Mammary epithelial cell (primary cell): ENCODE measurements at regions of chr20 and their contacts with region 1.

Region 1: GRCh38 chr20:24634855-24635254 is 165.4 kb downstream of the SYNDIG1 start:
- DNase-seq: peak; percentile 81
- H3K4me3 ChIP-seq: no peak overlapping the region
- H3K27ac ChIP-seq: no peak overlapping the region
- H3K4me1 ChIP-seq: peaks cover 18% of the 10 kb centered on the region
- H3K27me3 ChIP-seq: no peaks in the 10 kb centered on the region
- CTCF ChIP-seq: no peak

Region 2: DNA sequence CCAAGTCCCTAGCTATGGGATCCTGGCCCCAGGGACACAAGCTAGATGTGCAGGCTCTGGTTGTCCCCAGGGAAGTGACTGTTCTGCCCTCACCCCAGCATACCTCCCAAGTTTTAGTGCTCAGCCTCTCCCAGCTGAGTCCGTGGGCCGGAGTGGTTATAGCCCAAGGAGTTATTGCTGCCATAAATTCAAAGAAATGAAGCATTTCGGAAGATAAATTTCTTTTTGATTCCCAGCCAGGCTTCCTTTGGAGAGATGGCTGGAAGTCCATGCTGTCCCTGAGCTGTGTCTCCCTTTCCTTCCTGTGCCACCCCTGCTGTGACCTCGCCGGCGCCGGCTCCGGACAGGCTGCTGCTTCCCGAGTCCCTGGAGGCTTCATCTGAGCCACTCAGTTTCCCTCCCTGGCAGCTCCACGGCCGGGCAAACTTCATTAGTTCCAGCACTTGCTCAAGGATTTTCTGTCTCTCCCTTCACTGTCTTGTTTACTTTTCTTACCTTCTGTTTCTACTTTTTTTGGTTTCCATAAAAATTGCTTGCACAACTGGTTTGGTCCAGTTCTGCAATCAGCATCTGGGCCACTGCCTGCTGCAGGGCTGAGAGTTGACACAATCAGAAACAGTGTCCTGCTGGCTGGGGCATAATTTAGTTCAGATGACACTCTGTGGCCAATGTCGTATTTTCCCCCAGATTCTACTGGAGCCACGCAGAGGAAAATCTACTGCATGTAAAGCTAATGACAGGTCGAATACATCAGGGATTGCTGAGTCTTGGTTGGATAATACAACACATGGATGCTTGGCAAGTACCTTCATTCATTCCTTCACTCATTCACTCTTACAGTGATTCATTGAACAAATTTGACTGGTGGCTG is 60.1 kb after region 1 on chr20:
- CTCF ChIA-PET with region 1: no interaction called
- dilution Hi-C with region 1: loop called (anchors 5 kb)
- in situ Hi-C with region 1: no loop called
- intact Hi-C with region 1: no loop called
- DNase-seq: no peak
- H3K4me3 ChIP-seq: no peak overlapping the region
- H3K27ac ChIP-seq: no peak overlapping the region
- H3K4me1 ChIP-seq: peaks cover 4% of the 10 kb centered on the region
- H3K27me3 ChIP-seq: no peaks in the 10 kb centered on the region
- CTCF ChIP-seq: no peak

Region 3: GRCh38 chr20:24746351-24746685 is 111.5 kb after region 1 on chr20:
- CTCF ChIA-PET with region 1: no interaction called
- dilution Hi-C with region 1: loop called (anchors 10 kb)
- in situ Hi-C with region 1: no loop called
- intact Hi-C with region 1: no loop called
- DNase-seq: peak; percentile 96
- H3K4me3 ChIP-seq: no peak overlapping the region
- H3K27ac ChIP-seq: no peak overlapping the region
- H3K4me1 ChIP-seq: peaks cover 11% of the 10 kb centered on the region
- H3K27me3 ChIP-seq: no peaks in the 10 kb centered on the region
- CTCF ChIP-seq: no peak

Region 4: DNA sequence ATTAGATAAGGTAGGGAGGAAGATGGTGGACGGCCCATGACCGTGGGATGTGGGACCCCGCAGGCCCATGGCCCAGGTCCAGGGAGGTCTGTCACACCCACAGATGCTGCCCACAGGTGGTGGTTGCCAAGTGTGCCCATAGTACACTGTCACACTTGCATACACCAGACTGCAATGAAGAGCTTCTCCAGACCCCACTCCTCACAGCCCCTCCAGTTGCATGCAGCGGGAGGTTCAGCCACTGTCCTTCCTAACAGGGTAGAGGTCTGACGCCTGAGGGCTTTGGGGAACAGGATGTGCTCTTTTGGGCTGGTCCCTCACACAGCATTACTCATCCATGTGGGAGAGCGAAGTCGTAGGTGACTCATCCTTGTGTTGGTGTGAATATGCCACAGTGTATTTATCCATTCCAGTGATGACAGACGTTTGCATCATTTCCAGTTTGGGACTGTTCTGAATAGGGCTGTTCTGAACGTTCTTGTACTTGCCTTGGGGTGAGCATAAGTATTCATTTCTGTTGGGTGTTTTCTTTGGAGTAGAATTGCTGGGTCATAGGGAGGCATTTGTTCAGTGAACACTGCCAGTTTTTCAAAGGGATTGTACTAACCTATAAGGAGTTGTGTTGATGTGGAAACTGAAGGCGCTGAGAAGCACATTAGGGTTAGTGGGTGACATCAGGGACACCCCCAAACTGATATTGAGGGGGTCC is 602.9 kb after region 1 on chr20:
- CTCF ChIA-PET with region 1: no interaction called
- dilution Hi-C with region 1: no loop called
- in situ Hi-C with region 1: no loop called
- intact Hi-C with region 1: no loop called
- DNase-seq: peak; percentile 100
- H3K4me3 ChIP-seq: no peak overlapping the region
- H3K27ac ChIP-seq: peak overlapping the region; percentile 98
- H3K4me1 ChIP-seq: peaks cover 84% of the 10 kb centered on the region
- H3K27me3 ChIP-seq: no peaks in the 10 kb centered on the region
- CTCF ChIP-seq: no peak